Naive thymus-derived CD8-positive, alpha-beta T cell (primary cell): ENCODE measurements at regions of chr11 and their contacts with region 1.

Region 1: GRCh38 chr11:13277768-13278613 is at the start of gene BMAL1:
- DNase-seq: peak in 8 of 10 donors; percentile 39 to 75 (median 55)
- ATAC-seq: peak; percentile 36 to 44
- H3K4me3 Mint-ChIP-seq: peak within 1 kb of the TSS; percentile 95 to 99 (median 98)
- H3K27ac Mint-ChIP-seq: peak within 1 kb of the TSS; percentile 91 to 96 (median 94)
- H3K4me1 Mint-ChIP-seq: peaks cover 40 to 58% (median 53%) of the 10 kb centered on the region in 4 donors
- H3K27me3 Mint-ChIP-seq: peaks cover 0 to 5% (median 0%) of the 10 kb centered on the region in 5 donors
- polyA plus RNA-seq, gene BMAL1: 9.6 to 14.0 (median 12.3) TPM

Region 2: GRCh38 chr11:13289081-13289480 is 11.1 kb after region 1 on chr11:
- POLR2A ChIA-PET with region 1: interaction called, 10 read pairs
- DNase-seq: no peak
- ATAC-seq: no peak
- H3K4me3 Mint-ChIP-seq: no peak overlapping the region
- H3K27ac Mint-ChIP-seq: no peak overlapping the region
- H3K4me1 Mint-ChIP-seq: peaks cover 36 to 88% (median 79%) of the 10 kb centered on the region in 4 donors
- H3K27me3 Mint-ChIP-seq: no peaks in the 10 kb centered on the region